GM12878 (cell line): ENCODE measurements at regions of chr4 and their contacts with region 1.

Region 1: GRCh38 chr4:158809611-158810486 is 41.0 kb downstream of the FNIP2 start:
- DNase-seq: peak; percentile 89
- ATAC-seq: peak; percentile 91
- H3K4me3 ChIP-seq: no peak overlapping the region; the same call in 1 of the 2 replicates
- H3K27ac ChIP-seq: peak overlapping the region; percentile 43
- H3K4me1 ChIP-seq: peaks cover 30% of the 10 kb centered on the region
- H3K27me3 ChIP-seq: no peaks in the 10 kb centered on the region; a peak in 1 of 4 replicates
- CTCF ChIP-seq: no peak
- EP300 ChIP-seq: peak; percentile 84 to 89
- POLR2A ChIP-seq: no peak
- RAD21 ChIP-seq: no peak

Region 2: GRCh38 chr4:158768555-158769174 is 41.2 kb before region 1 on chr4 and contains the start of gene FNIP2:
- CTCF ChIA-PET with region 1: no interaction called
- POLR2A ChIA-PET with region 1: interaction called, 3 read pairs
- RAD21 ChIA-PET with region 1: interaction called, 10 read pairs
- SMC1A ChIA-PET with region 1: interaction called, 15 read pairs
- in situ Hi-C with region 1: no loop called
- intact Hi-C with region 1: no loop called
- DNase-seq: no peak
- ATAC-seq: peak; percentile 88
- H3K4me3 ChIP-seq: peak within 1 kb of the TSS; percentile 54
- H3K27ac ChIP-seq: no peak within 1 kb of the TSS; the same call in 1 of the 2 replicates
- H3K4me1 ChIP-seq: no peaks in the 10 kb centered on the region; the same call in 1 of the 2 replicates
- H3K27me3 ChIP-seq: peaks cover 2% of the 10 kb centered on the region in 2 experiments; a peak in 1 of 4 replicates
- CTCF ChIP-seq: no peak
- EP300 ChIP-seq: no peak
- POLR2A ChIP-seq: peak; percentile 45; the same call in 1 of the 2 replicates
- RAD21 ChIP-seq: no peak
- polyA plus RNA-seq, gene FNIP2: 0.03 to 0.04 TPM

Region 3: GRCh38 chr4:158778156-158778711 is 31.6 kb before region 1 on chr4:
- CTCF ChIA-PET with region 1: interaction called, 8 read pairs
- POLR2A ChIA-PET with region 1: interaction called, 10 read pairs
- RAD21 ChIA-PET with region 1: interaction called, 42 read pairs
- SMC1A ChIA-PET with region 1: interaction called, 291 read pairs
- in situ Hi-C with region 1: no loop called
- intact Hi-C with region 1: no loop called
- DNase-seq: peak; percentile 60
- ATAC-seq: peak; percentile 96
- H3K4me3 ChIP-seq: no peak overlapping the region
- H3K27ac ChIP-seq: no peak overlapping the region
- H3K4me1 ChIP-seq: peaks cover 10% of the 10 kb centered on the region; the same call in 1 of the 2 replicates
- H3K27me3 ChIP-seq: 0 out of 4 replicates have a peak, but pooled peaks cover 0 to 2% of the 10 kb centered on the region in 2 experiments
- CTCF ChIP-seq: no peak
- EP300 ChIP-seq: no peak
- POLR2A ChIP-seq: no peak
- RAD21 ChIP-seq: no peak

Region 4: GRCh38 chr4:158786121-158786601 is 23.7 kb before region 1 on chr4:
- CTCF ChIA-PET with region 1: interaction called, 8 read pairs
- POLR2A ChIA-PET with region 1: interaction called, 10 read pairs
- RAD21 ChIA-PET with region 1: interaction called, 42 read pairs
- SMC1A ChIA-PET with region 1: interaction called, 291 read pairs
- in situ Hi-C with region 1: no loop called
- intact Hi-C with region 1: no loop called
- DNase-seq: no peak
- ATAC-seq: no peak
- H3K4me3 ChIP-seq: no peak overlapping the region
- H3K27ac ChIP-seq: peak overlapping the region; percentile 22; the same call in 1 of the 2 replicates
- H3K4me1 ChIP-seq: no peaks in the 10 kb centered on the region
- H3K27me3 ChIP-seq: no peaks in the 10 kb centered on the region
- CTCF ChIP-seq: no peak
- EP300 ChIP-seq: no peak
- POLR2A ChIP-seq: no peak
- RAD21 ChIP-seq: no peak

Region 5: DNA sequence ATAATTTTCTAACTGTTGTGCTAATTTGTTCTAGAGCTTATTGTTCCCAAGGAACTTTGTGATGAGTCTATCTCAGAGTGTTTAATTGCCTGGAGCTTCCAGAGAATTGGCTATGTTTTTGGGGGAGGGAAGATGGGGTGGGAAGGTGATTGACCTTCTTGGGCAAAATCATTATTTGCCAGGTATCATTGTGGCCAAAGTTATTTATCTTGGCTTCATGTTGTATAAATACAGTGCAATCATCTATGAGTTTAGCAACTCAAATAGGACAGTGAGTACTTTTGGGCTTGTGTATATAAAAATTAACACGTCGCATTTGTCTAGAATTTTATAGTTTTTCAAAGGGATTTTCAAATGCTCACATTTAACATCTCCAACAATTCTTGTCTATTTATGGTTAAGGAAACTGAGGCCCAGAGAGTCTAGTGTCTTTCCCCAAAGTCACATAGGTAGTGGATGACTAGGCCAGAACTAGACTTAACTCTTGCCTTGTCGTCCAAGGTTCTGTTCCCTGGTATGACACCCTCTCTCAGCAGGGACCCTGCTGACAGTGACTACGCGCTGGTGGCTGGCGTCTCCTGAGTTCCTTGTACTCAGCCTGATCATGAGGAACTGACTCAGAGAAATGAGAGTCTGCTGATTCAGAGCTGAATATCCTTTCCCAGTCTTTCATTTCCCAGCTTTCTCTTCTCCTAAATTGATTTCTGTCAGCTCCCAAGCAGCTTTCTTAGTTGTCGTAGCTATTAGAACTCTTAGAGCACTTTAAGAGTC is 13.3 kb before region 1 on chr4:
- CTCF ChIA-PET with region 1: interaction called, 6 read pairs
- POLR2A ChIA-PET with region 1: interaction called, 17 read pairs
- RAD21 ChIA-PET with region 1: interaction called, 22 read pairs
- SMC1A ChIA-PET with region 1: interaction called, 291 read pairs
- in situ Hi-C with region 1: no loop called
- intact Hi-C with region 1: no loop called
- DNase-seq: no peak
- ATAC-seq: no peak
- H3K4me3 ChIP-seq: no peak overlapping the region
- H3K27ac ChIP-seq: no peak overlapping the region
- H3K4me1 ChIP-seq: no peaks in the 10 kb centered on the region
- H3K27me3 ChIP-seq: no peaks in the 10 kb centered on the region
- CTCF ChIP-seq: no peak
- EP300 ChIP-seq: no peak
- POLR2A ChIP-seq: no peak
- RAD21 ChIP-seq: no peak

Region 6: DNA sequence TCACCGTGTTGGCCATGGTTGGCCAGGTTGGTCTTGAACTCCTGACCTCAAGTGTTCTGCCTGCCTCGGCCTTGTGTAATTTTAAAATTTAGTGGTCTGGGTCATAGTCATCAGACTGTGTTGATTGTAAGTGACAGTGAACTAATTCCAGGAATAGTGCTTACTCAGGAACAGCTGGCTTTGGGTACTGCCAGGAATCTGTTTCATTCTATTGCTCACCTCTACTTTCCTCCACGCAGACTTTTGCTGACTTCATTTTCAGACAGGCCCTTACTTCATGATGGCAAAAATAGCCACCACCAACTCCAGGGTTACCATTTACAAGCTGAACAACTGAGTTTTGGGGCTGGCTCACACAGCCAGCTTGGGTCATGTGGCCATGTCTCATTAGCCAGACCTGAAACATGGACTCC is 13.6 kb after region 1 on chr4:
- CTCF ChIA-PET with region 1: interaction called, 10 read pairs
- POLR2A ChIA-PET with region 1: interaction called, 52 read pairs
- RAD21 ChIA-PET with region 1: interaction called, 34 read pairs
- SMC1A ChIA-PET with region 1: interaction called, 101 read pairs
- in situ Hi-C with region 1: no loop called
- intact Hi-C with region 1: no loop called
- DNase-seq: no peak
- ATAC-seq: no peak
- H3K4me3 ChIP-seq: no peak overlapping the region
- H3K27ac ChIP-seq: no peak overlapping the region
- H3K4me1 ChIP-seq: peaks cover 22% of the 10 kb centered on the region
- H3K27me3 ChIP-seq: no peaks in the 10 kb centered on the region
- CTCF ChIP-seq: no peak
- EP300 ChIP-seq: no peak
- POLR2A ChIP-seq: no peak
- RAD21 ChIP-seq: no peak

Region 7: GRCh38 chr4:158856852-158857251 is 47.0 kb after region 1 on chr4:
- CTCF ChIA-PET with region 1: interaction called, 22 read pairs
- POLR2A ChIA-PET with region 1: interaction called, 3 read pairs
- RAD21 ChIA-PET with region 1: interaction called, 39 read pairs
- SMC1A ChIA-PET with region 1: interaction called, 34 read pairs
- in situ Hi-C with region 1: no loop called
- intact Hi-C with region 1: no loop called
- DNase-seq: no peak
- ATAC-seq: peak; percentile 78
- H3K4me3 ChIP-seq: no peak overlapping the region
- H3K27ac ChIP-seq: no peak overlapping the region
- H3K4me1 ChIP-seq: peaks cover 8% of the 10 kb centered on the region
- H3K27me3 ChIP-seq: no peaks in the 10 kb centered on the region
- CTCF ChIP-seq: peak; percentile 51 to 71 (median 52); a peak in 5 of 6 replicates
- EP300 ChIP-seq: no peak
- POLR2A ChIP-seq: no peak
- RAD21 ChIP-seq: peak; percentile 93